Cardiac septum (tissue), 1 donor: ENCODE measurements at regions of chr1 and their contacts with region 1.

Region 1: GRCh38 chr1:55140546-55140983 is 74.6 kb downstream of the USP24 start:
- DNase-seq: no peak

Region 2: GRCh38 chr1:55277377-55278130 is 137.0 kb after region 1 on chr1:
- intact Hi-C with region 1: loop called (anchors 1 kb)
- DNase-seq: peak; percentile 80